Right cardiac atrium (tissue), 5 donors: ENCODE measurements at regions of chr12 and their contacts with region 1.

Region 1: DNA sequence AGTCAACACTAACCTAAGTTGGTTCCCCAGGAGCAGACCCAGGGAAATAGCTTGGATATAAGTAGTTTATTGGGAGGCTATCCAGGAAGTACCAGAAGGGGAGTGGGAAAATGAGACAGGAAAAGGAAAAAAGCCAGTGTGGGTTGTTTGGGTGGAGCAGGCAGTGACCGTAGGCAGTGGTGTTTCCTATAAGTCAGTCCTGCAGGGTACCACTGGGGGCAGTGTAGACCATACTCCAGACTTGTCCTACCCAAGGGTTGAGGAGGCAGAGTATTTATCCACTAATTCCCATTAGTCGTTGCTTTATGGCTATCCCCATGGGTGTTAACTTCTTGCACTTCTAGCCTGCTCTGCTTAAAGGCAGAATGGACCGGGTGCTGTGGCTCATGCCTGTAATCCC is 6.4 kb upstream of the CCDC60 start:
- DNase-seq: peak; percentile 21 to 62 (median 61)
- ATAC-seq: peak; percentile 78 to 85
- H3K4me3 ChIP-seq: no peak overlapping the region
- H3K27ac ChIP-seq: no peak overlapping the region
- H3K4me1 ChIP-seq: no peaks in the 10 kb centered on the region
- H3K27me3 ChIP-seq: no peaks in the 10 kb centered on the region

Region 2: GRCh38 chr12:119406308-119406707 is 78.2 kb after region 1 on chr12:
- intact Hi-C with region 1: loop called in 1 of 4 experiments (anchors 5 kb)
- DNase-seq: no peak
- ATAC-seq: no peak
- H3K4me3 ChIP-seq: no peak overlapping the region
- H3K27ac ChIP-seq: no peak overlapping the region
- H3K4me1 ChIP-seq: no peaks in the 10 kb centered on the region
- H3K27me3 ChIP-seq: no peaks in the 10 kb centered on the region

Region 3: GRCh38 chr12:119512772-119513497 is 184.8 kb after region 1 on chr12:
- intact Hi-C with region 1: no loop called
- DNase-seq: no peak
- ATAC-seq: no peak
- H3K4me3 ChIP-seq: no peak overlapping the region
- H3K27ac ChIP-seq: no peak overlapping the region
- H3K4me1 ChIP-seq: no peaks in the 10 kb centered on the region
- H3K27me3 ChIP-seq: no peaks in the 10 kb centered on the region